Activated T-helper 1 cell treated with anti-CD3 and anti-CD28 coated beads, Interleukin-12 subunit alpha, Interleukin-12 subunit beta, Interleukin-2, Interleukin-4 antibody, amounts not matched to agents 30 ng/mL and 10 ng/mL and 1 ng/mL, durations not matched to agents 14 hours and 24 hours and 36 hours (primary cell): ENCODE measurements at regions of chr13 and their contacts with region 1.

Region 1: DNA sequence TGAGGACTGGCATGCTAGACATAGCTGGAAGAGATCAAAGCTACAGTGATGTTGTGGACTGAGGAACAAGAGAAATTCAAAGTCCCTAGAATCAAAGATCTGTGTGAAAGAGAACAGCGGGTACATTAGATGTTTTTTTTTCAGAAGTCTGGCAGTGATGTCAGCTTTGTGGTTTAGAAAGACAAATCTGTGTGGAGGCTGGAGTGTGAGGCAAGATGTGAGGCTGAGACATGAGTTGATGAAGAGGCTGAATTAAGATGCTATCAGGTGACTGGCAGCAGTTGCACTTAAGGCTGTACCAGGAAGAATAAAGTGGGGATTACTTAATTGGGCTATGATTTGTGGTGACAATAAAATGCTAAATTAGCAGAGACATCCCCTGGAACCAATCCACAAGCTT is 46.5 kb downstream of the DNAJC3 start:
- DNase-seq: no peak
- H3K4me3 Mint-ChIP-seq: no peak overlapping the region
- H3K27ac Mint-ChIP-seq: no peak overlapping the region
- H3K4me1 Mint-ChIP-seq: peaks cover 7% of the 10 kb centered on the region
- H3K27me3 Mint-ChIP-seq: no peaks in the 10 kb centered on the region

Region 2: GRCh38 chr13:95301183-95301967 is 422.1 kb before region 1 on chr13 and contains the start of gene ABCC4:
- intact Hi-C with region 1: no loop called
- DNase-seq: peak; percentile 51
- H3K4me3 Mint-ChIP-seq: peak within 1 kb of the TSS; percentile 95
- H3K27ac Mint-ChIP-seq: peak within 1 kb of the TSS; percentile 82
- H3K4me1 Mint-ChIP-seq: peaks cover 33% of the 10 kb centered on the region
- H3K27me3 Mint-ChIP-seq: peaks cover 15% of the 10 kb centered on the region
- total RNA-seq, gene ABCC4: 16.4 and 20.2 TPM in 2 replicates

Region 3: DNA sequence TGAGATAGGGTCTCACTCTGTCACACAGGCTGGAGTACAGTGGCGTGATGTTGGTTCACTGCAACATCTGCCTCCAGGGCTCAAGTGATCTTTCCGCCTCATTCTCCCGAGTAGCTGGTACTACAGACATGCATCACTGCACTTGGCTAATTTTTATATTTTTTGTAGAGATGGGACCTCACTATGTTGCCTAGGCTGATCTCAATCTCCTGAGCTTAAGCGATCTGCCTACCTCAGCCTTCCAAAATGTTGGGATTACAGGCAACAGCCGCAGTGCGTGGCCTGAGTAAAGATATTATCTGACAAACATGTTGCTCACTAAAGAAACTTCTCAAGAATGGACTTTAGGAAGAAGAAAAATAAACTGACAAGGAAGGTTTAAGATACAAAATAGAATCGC is 296.8 kb before region 1 on chr13:
- intact Hi-C with region 1: no loop called
- DNase-seq: no peak
- H3K4me3 Mint-ChIP-seq: no peak overlapping the region
- H3K27ac Mint-ChIP-seq: no peak overlapping the region
- H3K4me1 Mint-ChIP-seq: no peaks in the 10 kb centered on the region
- H3K27me3 Mint-ChIP-seq: peaks cover 4% of the 10 kb centered on the region

Region 4: GRCh38 chr13:95703576-95703975 is 19.9 kb before region 1 on chr13:
- intact Hi-C with region 1: loop called (anchors 2 kb)
- DNase-seq: no peak
- H3K4me3 Mint-ChIP-seq: no peak overlapping the region
- H3K27ac Mint-ChIP-seq: peak overlapping the region; percentile 20
- H3K4me1 Mint-ChIP-seq: peaks cover 40% of the 10 kb centered on the region
- H3K27me3 Mint-ChIP-seq: no peaks in the 10 kb centered on the region

Region 5: GRCh38 chr13:95754069-95754468 is 30.6 kb after region 1 on chr13:
- intact Hi-C with region 1: no loop called
- DNase-seq: no peak
- H3K4me3 Mint-ChIP-seq: no peak overlapping the region
- H3K27ac Mint-ChIP-seq: no peak overlapping the region
- H3K4me1 Mint-ChIP-seq: no peaks in the 10 kb centered on the region
- H3K27me3 Mint-ChIP-seq: no peaks in the 10 kb centered on the region